HEK293T (cell line): ENCODE measurements at regions of chr9 and their contacts with region 1.

Region 1: GRCh38 chr9:97632985-97633858 is at the starts of genes NCBP1 and TSTD2:
- DNase-seq: peak; percentile 88

Region 2: DNA sequence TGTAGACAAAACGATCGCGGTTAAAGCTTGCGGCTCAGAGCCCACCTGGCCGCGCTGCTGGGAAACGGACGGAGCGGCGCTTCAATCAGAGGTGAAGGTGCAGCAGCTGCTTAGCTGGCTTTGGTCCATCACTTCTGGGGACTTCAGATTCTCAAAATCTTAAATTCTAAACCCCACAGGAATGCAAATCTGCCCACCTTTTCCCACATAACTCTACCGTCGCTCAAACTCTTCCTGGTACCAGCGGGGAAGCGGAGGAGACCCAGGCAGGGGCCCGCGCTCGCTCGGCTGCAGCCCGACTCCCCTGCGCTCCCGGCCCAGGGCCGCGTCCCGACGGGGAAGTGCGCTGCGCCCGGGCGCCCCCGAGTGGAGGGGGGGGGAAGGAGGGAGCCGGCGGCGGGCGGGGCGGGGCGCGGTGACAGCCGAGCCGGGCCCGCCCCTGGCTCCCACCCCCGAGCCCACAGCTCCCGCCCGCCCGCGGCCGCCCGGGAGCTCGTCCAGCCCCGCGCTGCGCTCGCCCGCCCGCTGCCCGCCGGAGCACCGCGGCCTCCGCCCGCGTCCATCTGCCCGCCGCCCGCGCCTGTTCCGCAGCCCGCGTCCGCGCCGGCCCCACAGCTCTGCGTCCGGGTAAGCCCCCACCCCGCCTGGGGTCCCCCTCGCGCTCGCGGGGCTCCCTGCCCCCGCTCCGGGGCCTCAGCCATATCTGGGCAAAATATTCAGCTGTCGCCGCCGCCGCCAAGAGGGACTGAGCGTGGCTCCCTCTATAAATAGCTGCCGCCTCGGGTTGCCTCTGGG is 131.8 kb before region 1 on chr9 and contains the start of gene TMOD1:
- CTCF ChIA-PET with region 1: interaction called, 4 read pairs
- POLR2A ChIA-PET with region 1: interaction called, 13 read pairs
- DNase-seq: peak; percentile 89

Region 3: GRCh38 chr9:97645720-97646119 is 12.5 kb after region 1 on chr9:
- CTCF ChIA-PET with region 1: no interaction called
- POLR2A ChIA-PET with region 1: interaction called, 18 read pairs
- DNase-seq: no peak

Region 4: DNA sequence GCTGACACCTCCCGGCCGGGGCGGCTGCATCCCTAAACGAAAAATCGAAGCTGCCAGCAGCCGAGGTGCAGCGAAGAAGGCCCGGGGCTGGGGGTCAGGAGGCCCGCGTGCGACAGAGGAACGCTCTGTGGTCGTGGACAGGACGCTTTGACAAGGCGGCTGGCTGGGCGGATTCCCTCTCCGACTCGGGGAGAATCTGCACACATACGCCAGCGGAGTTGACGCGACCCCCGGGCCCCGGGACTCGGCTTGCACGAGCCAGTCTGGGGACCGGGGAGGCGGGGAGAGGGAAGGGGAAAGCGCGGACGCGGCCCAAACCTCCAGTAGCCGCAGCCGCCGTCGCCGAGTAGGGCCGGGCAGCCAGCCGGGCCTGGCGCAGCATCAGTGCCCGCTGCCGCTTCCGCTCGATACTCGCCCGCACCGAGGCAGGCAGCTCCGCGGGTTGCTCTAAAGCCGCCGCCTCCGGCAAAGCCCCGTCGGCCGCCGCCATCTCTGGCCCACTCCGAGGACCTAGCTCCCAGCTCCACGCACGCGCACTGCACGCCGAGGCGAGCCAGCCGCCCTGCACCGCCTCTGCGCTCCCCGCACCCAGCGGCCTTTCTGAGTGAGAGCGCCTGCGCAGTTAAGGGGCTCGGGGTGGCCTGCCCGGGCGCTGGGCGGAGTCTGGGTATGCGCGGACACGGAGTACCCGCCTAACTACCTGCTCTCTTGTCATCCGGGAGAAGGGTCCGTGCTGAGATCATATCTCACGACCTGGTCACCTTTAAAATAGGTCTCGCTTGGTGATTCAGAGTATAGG is 63.8 kb after region 1 on chr9 and contains the start of gene XPA:
- CTCF ChIA-PET with region 1: no interaction called
- POLR2A ChIA-PET with region 1: interaction called, 11 read pairs
- DNase-seq: peak; percentile 99

Region 5: DNA sequence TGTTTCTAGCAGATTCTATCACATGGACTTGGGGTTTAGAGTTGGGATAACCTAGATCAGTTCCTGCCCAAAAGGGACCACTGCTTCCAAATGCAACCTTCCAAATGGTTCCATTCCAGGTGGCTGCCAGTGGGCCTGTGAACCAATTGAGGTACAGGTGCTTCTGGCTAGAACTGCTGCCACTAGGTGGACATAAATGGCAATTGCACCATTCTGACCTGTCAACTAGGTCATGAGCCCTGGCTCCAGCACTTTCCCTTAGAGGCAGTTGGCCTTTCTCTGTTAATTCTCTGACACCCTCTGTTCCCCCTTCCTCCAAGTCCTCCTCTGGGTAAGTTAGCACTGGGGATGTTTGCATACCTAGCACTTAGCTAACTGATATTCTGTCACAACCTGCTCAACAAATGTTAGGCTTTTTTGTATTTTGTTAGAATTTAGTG is 321.3 kb after region 1 on chr9:
- CTCF ChIA-PET with region 1: no interaction called
- POLR2A ChIA-PET with region 1: no interaction called
- DNase-seq: peak; percentile 72

Region 6: GRCh38 chr9:98097836-98098235 is 464.6 kb after region 1 on chr9:
- CTCF ChIA-PET with region 1: no interaction called
- POLR2A ChIA-PET with region 1: no interaction called
- DNase-seq: no peak